ENCODE measurements at regions of chr4 and their contacts with region 1.

Region 1: GRCh38 chr4:119559044-119559647 is 69.5 kb downstream of the PDE5A start:
- DNase-seq: peak; percentile 12
- ATAC-seq: peak; percentile 53; the same call in 1 of the 2 replicates
- H3K4me3 ChIP-seq: no peak overlapping the region
- H3K27ac ChIP-seq: no peak overlapping the region
- H3K4me1 ChIP-seq: no peaks in the 10 kb centered on the region
- H3K27me3 ChIP-seq: no peaks in the 10 kb centered on the region
- CTCF ChIP-seq: peak; percentile 28 to 65 (median 51); a peak in 4 of 6 replicates
- POLR2A ChIP-seq: no peak
- RAD21 ChIP-seq: peak; percentile 60

Region 2: DNA sequence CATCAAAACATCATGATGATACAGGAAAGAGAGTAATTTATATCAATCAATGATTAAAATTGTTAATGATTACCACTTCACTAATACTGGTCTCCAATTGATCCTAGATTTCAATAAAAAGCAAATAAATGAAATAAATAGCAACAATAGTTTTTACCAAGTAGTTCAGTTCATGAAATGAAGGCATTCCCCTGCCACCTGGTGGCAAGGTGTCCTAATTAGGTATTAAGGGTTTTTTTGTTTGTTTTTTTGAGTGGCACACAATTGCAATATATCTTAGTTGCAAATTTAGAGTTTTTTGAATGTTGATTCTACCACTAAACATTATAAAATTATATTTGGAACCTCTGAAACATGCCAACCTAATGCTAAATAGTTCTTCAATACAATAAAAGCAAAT is 226.8 kb after region 1 on chr4:
- CTCF ChIA-PET with region 1: interaction called, 3 read pairs
- POLR2A ChIA-PET with region 1: no interaction called
- RAD21 ChIA-PET with region 1: no interaction called
- intact Hi-C with region 1: loop called (anchors 1 kb)
- DNase-seq: peak; percentile 13
- ATAC-seq: no peak
- H3K4me3 ChIP-seq: no peak overlapping the region
- H3K27ac ChIP-seq: no peak overlapping the region
- H3K4me1 ChIP-seq: no peaks in the 10 kb centered on the region
- H3K27me3 ChIP-seq: no peaks in the 10 kb centered on the region
- CTCF ChIP-seq: peak; percentile 38 to 55 (median 55); a peak in 5 of 6 replicates
- POLR2A ChIP-seq: no peak
- RAD21 ChIP-seq: peak; percentile 72

Region 3: GRCh38 chr4:120049732-120050494 is 490.8 kb after region 1 on chr4:
- CTCF ChIA-PET with region 1: interaction called, 12 read pairs
- POLR2A ChIA-PET with region 1: no interaction called
- RAD21 ChIA-PET with region 1: no interaction called
- intact Hi-C with region 1: loop called (anchors 1 kb)
- DNase-seq: peak; percentile 52
- ATAC-seq: peak; percentile 98
- H3K4me3 ChIP-seq: no peak overlapping the region
- H3K27ac ChIP-seq: no peak overlapping the region
- H3K4me1 ChIP-seq: peaks cover 0 to 4% of the 10 kb centered on the region in 2 experiments; a peak in 2 of 4 replicates
- H3K27me3 ChIP-seq: no peaks in the 10 kb centered on the region
- CTCF ChIP-seq: peak; percentile 65 to 77 (median 76)
- POLR2A ChIP-seq: no peak
- RAD21 ChIP-seq: peak; percentile 91

Region 4: GRCh38 chr4:120056246-120056645 is 497.1 kb after region 1 on chr4:
- CTCF ChIA-PET with region 1: interaction called, 14 read pairs
- POLR2A ChIA-PET with region 1: no interaction called
- RAD21 ChIA-PET with region 1: no interaction called
- intact Hi-C with region 1: no loop called
- DNase-seq: no peak
- ATAC-seq: no peak
- H3K4me3 ChIP-seq: no peak overlapping the region
- H3K27ac ChIP-seq: no peak overlapping the region
- H3K4me1 ChIP-seq: no peaks in the 10 kb centered on the region
- H3K27me3 ChIP-seq: no peaks in the 10 kb centered on the region
- CTCF ChIP-seq: peak in 2 of 3 experiments; percentile 18 to 36; a peak in 2 of 6 replicates
- POLR2A ChIP-seq: no peak
- RAD21 ChIP-seq: peak; percentile 45

Measured in HCT116 (cell line).